H1 (cell line): ENCODE measurements at regions of chr5 and their contacts with region 1.

Region 1: GRCh38 chr5:154610321-154611154 is 132.5 kb upstream of the HAND1 start:
- DNase-seq: peak; percentile 75 to 93
- H3K4me3 ChIP-seq: peak overlapping the region; percentile 4 to 75 (median 50); a peak in 7 of 8 replicates
- H3K27ac ChIP-seq: no peak overlapping the region
- H3K4me1 ChIP-seq: peaks cover 6 to 8% (median 8%) of the 10 kb centered on the region in 4 experiments; a peak in 6 of 7 replicates
- H3K27me3 ChIP-seq: peaks cover 9 to 36% (median 33%) of the 10 kb centered on the region in 4 experiments
- CTCF ChIP-seq: peak; percentile 98 to 100 (median 98)
- EP300 ChIP-seq: 0 out of 3 replicates have a peak, but pooled peaks of 1 of the 2 experiments have one; percentile 47
- POLR2A ChIP-seq: no peak
- RAD21 ChIP-seq: peak; percentile 100

Region 2: GRCh38 chr5:154421868-154422267 is 188.7 kb before region 1 on chr5:
- CTCF ChIA-PET with region 1: interaction called, 38 read pairs
- POLR2A ChIA-PET with region 1: no interaction called
- DNase-seq: no peak
- H3K4me3 ChIP-seq: no peak overlapping the region
- H3K27ac ChIP-seq: no peak overlapping the region
- H3K4me1 ChIP-seq: peaks cover 0 to 4% (median 0%) of the 10 kb centered on the region in 4 experiments; a peak in 1 of 7 replicates
- H3K27me3 ChIP-seq: no peaks in the 10 kb centered on the region
- CTCF ChIP-seq: peak; percentile 71 to 83 (median 77)
- EP300 ChIP-seq: no peak
- POLR2A ChIP-seq: no peak
- RAD21 ChIP-seq: peak; percentile 87 to 88

Region 3: DNA sequence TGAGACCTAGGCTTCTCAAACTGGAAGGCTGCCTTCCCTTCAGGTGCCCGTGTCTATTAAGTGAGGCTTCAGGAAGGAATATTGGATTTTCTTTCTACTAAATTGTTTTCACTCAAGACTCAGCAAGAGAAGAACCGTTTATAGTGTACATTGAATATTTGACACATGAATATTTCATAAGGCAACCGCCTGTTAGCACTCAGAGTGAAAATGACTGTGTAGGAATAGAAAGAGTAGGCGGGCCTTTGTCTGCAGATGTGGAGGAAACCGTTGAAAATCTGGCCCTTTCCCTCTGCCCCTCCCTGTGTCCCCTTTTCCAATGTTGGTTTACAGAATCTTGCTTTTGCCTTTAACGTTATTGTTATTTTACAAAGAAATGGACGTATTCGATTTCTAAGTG is 158.6 kb before region 1 on chr5:
- CTCF ChIA-PET with region 1: interaction called, 10 read pairs
- POLR2A ChIA-PET with region 1: no interaction called
- DNase-seq: no peak
- H3K4me3 ChIP-seq: no peak overlapping the region
- H3K27ac ChIP-seq: no peak overlapping the region
- H3K4me1 ChIP-seq: peaks cover 0 to 3% (median 0%) of the 10 kb centered on the region in 4 experiments; a peak in 2 of 7 replicates
- H3K27me3 ChIP-seq: peaks cover 0 to under 1% (median 0%) of the 10 kb centered on the region in 4 experiments; a peak in 1 of 7 replicates
- CTCF ChIP-seq: no peak
- EP300 ChIP-seq: no peak
- POLR2A ChIP-seq: no peak
- RAD21 ChIP-seq: no peak

Region 4: DNA sequence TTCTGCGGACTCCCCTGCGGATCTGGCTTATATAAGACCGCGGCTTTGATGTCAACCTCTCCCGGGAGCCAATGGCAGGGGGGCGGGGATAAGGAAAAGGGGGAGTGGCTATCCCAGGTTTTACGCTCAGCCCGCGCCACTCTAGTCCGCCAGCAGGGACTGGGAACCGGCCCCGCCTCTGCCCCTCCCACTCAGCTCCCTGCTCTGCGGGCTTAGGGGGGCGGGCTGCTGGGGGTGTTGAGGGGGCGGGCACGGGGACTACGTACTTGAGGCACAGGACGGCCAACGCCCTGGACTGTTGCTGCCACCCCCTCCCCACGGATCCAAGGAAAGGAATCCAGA is 132.3 kb before region 1 on chr5 and contains the start of gene HAND1:
- CTCF ChIA-PET with region 1: interaction called, 273 read pairs
- POLR2A ChIA-PET with region 1: interaction called, 3 read pairs
- DNase-seq: peak in 1 of 2 experiments; percentile 93
- H3K4me3 ChIP-seq: peak within 1 kb of the TSS; percentile 27 to 58 (median 38); a peak in 7 of 8 replicates
- H3K27ac ChIP-seq: no peak within 1 kb of the TSS
- H3K4me1 ChIP-seq: peaks cover 26 to 62% (median 34%) of the 10 kb centered on the region in 4 experiments
- H3K27me3 ChIP-seq: peaks cover 96 to 100% (median 99%) of the 10 kb centered on the region in 4 experiments
- CTCF ChIP-seq: no peak
- EP300 ChIP-seq: no peak
- POLR2A ChIP-seq: no peak
- RAD21 ChIP-seq: no peak
- total RNA-seq, gene HAND1: not detected in 2 replicates

Region 5: GRCh38 chr5:154498591-154498990 is 111.9 kb before region 1 on chr5:
- CTCF ChIA-PET with region 1: interaction called, 17 read pairs
- POLR2A ChIA-PET with region 1: no interaction called
- DNase-seq: no peak
- H3K4me3 ChIP-seq: no peak overlapping the region
- H3K27ac ChIP-seq: no peak overlapping the region
- H3K4me1 ChIP-seq: no peaks in the 10 kb centered on the region
- H3K27me3 ChIP-seq: no peaks in the 10 kb centered on the region; a peak in 1 of 7 replicates
- CTCF ChIP-seq: no peak
- EP300 ChIP-seq: no peak
- POLR2A ChIP-seq: no peak
- RAD21 ChIP-seq: no peak

Region 6: DNA sequence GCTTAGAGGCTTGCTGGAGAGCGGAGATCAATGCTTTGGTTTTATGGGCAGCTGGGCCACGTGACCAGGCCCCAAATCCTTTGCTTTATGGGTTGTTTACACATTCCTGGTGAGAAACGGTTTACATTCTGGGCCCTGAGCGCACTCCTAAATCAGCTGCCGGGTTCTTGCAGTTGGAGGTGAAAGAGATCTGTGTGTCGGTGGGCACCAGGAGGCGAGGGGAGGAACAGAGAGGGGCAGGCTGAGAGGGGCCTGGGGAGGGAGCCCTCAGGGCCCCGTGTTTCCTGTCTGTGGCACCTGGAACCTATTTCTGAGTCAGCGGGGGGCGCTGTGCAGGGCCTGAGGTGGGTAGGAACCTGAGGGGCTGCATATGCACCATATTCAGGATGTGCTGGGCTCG is 69.0 kb before region 1 on chr5:
- CTCF ChIA-PET with region 1: interaction called, 16 read pairs
- POLR2A ChIA-PET with region 1: no interaction called
- DNase-seq: peak in 1 of 2 experiments; percentile 77
- H3K4me3 ChIP-seq: no peak overlapping the region
- H3K27ac ChIP-seq: no peak overlapping the region
- H3K4me1 ChIP-seq: peaks cover 0 to 3% (median 1%) of the 10 kb centered on the region in 4 experiments; a peak in 3 of 7 replicates
- H3K27me3 ChIP-seq: 0 out of 7 replicates have a peak, but pooled peaks cover 0 to 2% (median 0%) of the 10 kb centered on the region in 4 experiments
- CTCF ChIP-seq: peak; percentile 59 to 65 (median 63)
- EP300 ChIP-seq: no peak
- POLR2A ChIP-seq: no peak
- RAD21 ChIP-seq: peak; percentile 31 to 45

Region 7: GRCh38 chr5:154627698-154628678 is 17.4 kb after region 1 on chr5:
- CTCF ChIA-PET with region 1: interaction called, 12 read pairs
- POLR2A ChIA-PET with region 1: no interaction called
- DNase-seq: no peak
- H3K4me3 ChIP-seq: no peak overlapping the region
- H3K27ac ChIP-seq: peak overlapping the region; percentile 26; the same call in 1 of the 2 replicates
- H3K4me1 ChIP-seq: no peaks in the 10 kb centered on the region; a peak in 1 of 7 replicates
- H3K27me3 ChIP-seq: no peaks in the 10 kb centered on the region
- CTCF ChIP-seq: no peak
- EP300 ChIP-seq: no peak
- POLR2A ChIP-seq: no peak
- RAD21 ChIP-seq: no peak